Panc1 (cell line): ENCODE measurements at regions of chr11 and their contacts with region 1.

Region 1: DNA sequence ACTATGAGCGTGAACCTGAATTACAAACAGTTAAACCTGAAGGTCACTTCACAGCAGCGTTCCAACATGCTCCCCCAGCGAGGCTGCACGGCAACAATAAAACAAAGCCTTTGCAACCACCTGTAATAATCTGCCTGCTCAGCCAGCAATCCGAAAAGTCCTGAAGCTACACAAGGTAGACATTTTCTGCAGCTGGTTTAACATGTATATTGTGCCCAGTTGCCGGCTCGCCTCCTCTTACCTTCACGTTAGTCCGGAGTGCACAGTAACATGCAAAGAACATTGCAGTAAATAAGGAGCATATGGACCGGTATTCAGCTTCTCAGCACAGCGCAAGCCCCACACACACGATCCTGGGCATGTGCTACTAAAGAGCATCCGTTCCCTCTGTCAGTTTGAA is 704.3 kb downstream of the DLG2 start:
- DNase-seq: no peak
- ATAC-seq: no peak
- H3K4me3 ChIP-seq: no peak overlapping the region
- H3K27ac ChIP-seq: no peak overlapping the region
- H3K4me1 ChIP-seq: no peaks in the 10 kb centered on the region; the same call in 1 of the 2 replicates
- H3K27me3 ChIP-seq: peaks cover 2% of the 10 kb centered on the region
- CTCF ChIP-seq: no peak

Region 2: DNA sequence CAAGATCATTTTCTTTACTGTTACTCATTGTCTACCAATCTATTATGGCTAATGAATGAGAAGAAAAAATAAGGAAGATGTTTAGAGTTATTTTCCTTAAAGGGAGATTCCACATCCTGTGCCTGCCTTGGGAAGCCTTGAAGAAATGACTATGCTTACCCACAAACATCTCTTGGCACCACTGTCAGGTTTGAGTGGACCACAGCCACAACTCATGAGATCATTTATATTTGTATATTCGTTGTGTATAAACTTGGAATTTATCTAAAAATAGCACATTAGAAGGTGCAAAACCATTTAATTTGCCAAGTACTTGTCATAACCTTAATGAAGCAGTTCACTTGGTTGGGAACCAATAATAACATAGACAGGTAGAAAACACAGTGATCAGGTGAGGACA is 36.5 kb before region 1 on chr11:
- CTCF ChIA-PET with region 1: no interaction called
- POLR2A ChIA-PET with region 1: no interaction called
- in situ Hi-C with region 1: no loop called
- intact Hi-C with region 1: no loop called
- DNase-seq: no peak
- ATAC-seq: no peak
- H3K4me3 ChIP-seq: no peak overlapping the region
- H3K27ac ChIP-seq: no peak overlapping the region
- H3K4me1 ChIP-seq: no peaks in the 10 kb centered on the region
- H3K27me3 ChIP-seq: no peaks in the 10 kb centered on the region
- CTCF ChIP-seq: no peak

Region 3: DNA sequence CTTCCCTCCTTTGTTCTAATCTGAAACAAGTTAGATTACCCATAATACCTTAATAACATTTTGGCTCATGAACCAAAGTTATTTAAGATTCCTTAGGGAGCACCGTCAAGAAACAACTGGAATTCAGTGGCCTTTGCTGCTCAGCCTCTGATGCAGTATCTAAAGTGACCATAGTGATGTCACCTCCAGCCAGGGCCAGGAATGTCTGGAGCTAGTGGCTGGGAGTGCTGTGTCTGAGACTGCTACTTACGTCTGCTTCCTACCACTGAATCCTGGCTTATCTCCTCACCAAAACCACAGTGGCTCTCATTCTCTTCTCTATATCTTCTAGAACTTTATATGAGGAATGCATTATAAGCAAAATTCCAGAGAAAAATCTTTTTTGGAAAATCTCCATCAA is 46.3 kb after region 1 on chr11:
- CTCF ChIA-PET with region 1: no interaction called
- POLR2A ChIA-PET with region 1: no interaction called
- in situ Hi-C with region 1: no loop called
- intact Hi-C with region 1: loop called (anchors 5 kb)
- DNase-seq: no peak
- ATAC-seq: no peak
- H3K4me3 ChIP-seq: no peak overlapping the region
- H3K27ac ChIP-seq: no peak overlapping the region
- H3K4me1 ChIP-seq: no peaks in the 10 kb centered on the region
- H3K27me3 ChIP-seq: no peaks in the 10 kb centered on the region; the same call in 1 of the 2 replicates
- CTCF ChIP-seq: no peak

Region 4: GRCh38 chr11:85040166-85040565 is 117.3 kb after region 1 on chr11:
- CTCF ChIA-PET with region 1: no interaction called
- POLR2A ChIA-PET with region 1: no interaction called
- in situ Hi-C with region 1: no loop called
- intact Hi-C with region 1: no loop called
- DNase-seq: no peak
- ATAC-seq: no peak
- H3K4me3 ChIP-seq: no peak overlapping the region
- H3K27ac ChIP-seq: no peak overlapping the region
- H3K4me1 ChIP-seq: no peaks in the 10 kb centered on the region
- H3K27me3 ChIP-seq: no peaks in the 10 kb centered on the region
- CTCF ChIP-seq: no peak

Region 5: GRCh38 chr11:85369731-85370130 is 446.9 kb after region 1 on chr11:
- CTCF ChIA-PET with region 1: interaction called, 13 read pairs
- POLR2A ChIA-PET with region 1: no interaction called
- in situ Hi-C with region 1: no loop called
- intact Hi-C with region 1: no loop called
- DNase-seq: no peak
- ATAC-seq: no peak
- H3K4me3 ChIP-seq: no peak overlapping the region
- H3K27ac ChIP-seq: no peak overlapping the region
- H3K4me1 ChIP-seq: no peaks in the 10 kb centered on the region
- H3K27me3 ChIP-seq: no peaks in the 10 kb centered on the region
- CTCF ChIP-seq: no peak